Head of caudate nucleus (tissue), 42 donors: ENCODE measurements at regions of chr6 and their contacts with region 1.

Region 1: DNA sequence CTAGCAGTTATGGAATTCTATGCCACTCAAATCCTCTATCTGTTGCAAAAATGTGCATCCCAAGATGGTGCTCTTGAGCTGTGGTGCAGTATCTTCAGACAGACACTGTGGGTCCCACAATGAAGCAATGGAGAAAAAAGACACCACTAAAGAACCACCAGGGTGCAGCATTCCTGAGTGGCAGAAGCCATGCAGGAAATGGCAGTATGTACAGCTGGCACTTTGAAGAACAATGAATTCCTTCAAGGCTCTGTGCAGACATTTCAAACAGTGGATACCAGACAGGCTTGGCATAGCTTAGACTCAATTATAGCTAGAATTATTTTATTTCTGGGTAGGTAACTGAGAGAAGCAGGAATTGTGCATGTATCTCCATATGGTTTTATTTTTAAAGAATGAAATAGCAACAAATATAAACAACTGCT is 24.0 kb upstream of the HDAC2 start:
- DNase-seq: peak; percentile 22 to 95 (median 85)

Region 2: GRCh38 chr6:114090626-114091025 is 95.7 kb after region 1 on chr6:
- intact Hi-C with region 1: loop called (anchors 5 kb)
- DNase-seq: peak in 4 of 42 donors; percentile 12 to 46 (median 41)

Region 3: GRCh38 chr6:114108119-114109002 is 113.4 kb after region 1 on chr6:
- intact Hi-C with region 1: loop called (anchors 5 kb)
- DNase-seq: peak; percentile 59 to 95 (median 85)

Region 4: GRCh38 chr6:114290864-114291263 is 295.9 kb after region 1 on chr6:
- intact Hi-C with region 1: loop called (anchors 10 kb)
- DNase-seq: no peak

Region 5: GRCh38 chr6:114342826-114343780 is 348.2 kb after region 1 on chr6 and contains the start of gene HS3ST5:
- intact Hi-C with region 1: loop called (anchors 5 kb)
- DNase-seq: peak; percentile 62 to 92 (median 83)

Region 6: DNA sequence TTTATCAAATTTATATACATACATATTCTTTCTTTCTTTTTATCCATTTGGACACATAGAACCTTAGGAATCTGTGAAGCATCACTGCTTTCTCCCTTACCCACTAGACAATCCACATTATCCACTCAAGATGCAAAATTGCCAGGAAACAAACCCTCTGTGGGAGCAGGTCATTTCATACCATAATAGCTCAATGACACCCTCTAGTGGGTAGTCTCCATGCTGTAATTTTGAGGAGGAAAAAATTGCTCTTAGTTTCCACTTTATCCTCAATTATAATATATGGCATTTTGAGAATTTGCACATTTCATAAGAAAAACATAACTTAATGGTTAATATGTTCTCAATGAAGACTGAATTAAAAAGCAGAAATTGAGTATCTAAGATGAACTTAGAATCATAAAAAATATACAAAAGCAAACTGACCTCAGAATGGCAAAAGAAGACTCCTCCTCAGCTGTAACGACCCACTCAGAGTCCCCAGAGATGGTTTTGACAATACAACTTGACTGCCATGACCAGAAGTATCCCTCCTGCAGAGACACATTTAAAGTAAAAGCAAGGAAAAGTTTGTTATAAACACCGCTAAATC is 1901.7 kb after region 1 on chr6:
- intact Hi-C with region 1: loop called (anchors 10 kb)
- DNase-seq: peak in 13 of 42 donors; percentile 13 to 72 (median 34)